ENCODE measurements at regions of chr7 and their contacts with region 1.

Region 1: GRCh38 chr7:37074370-37074769 is 350.1 kb upstream of the AOAH start:
- DNase-seq: peak; percentile 54
- H3K4me3 Mint-ChIP-seq: no peak overlapping the region
- H3K27ac Mint-ChIP-seq: no peak overlapping the region
- H3K4me1 Mint-ChIP-seq: peaks cover 30% of the 10 kb centered on the region
- H3K27me3 Mint-ChIP-seq: no peaks in the 10 kb centered on the region

Region 2: DNA sequence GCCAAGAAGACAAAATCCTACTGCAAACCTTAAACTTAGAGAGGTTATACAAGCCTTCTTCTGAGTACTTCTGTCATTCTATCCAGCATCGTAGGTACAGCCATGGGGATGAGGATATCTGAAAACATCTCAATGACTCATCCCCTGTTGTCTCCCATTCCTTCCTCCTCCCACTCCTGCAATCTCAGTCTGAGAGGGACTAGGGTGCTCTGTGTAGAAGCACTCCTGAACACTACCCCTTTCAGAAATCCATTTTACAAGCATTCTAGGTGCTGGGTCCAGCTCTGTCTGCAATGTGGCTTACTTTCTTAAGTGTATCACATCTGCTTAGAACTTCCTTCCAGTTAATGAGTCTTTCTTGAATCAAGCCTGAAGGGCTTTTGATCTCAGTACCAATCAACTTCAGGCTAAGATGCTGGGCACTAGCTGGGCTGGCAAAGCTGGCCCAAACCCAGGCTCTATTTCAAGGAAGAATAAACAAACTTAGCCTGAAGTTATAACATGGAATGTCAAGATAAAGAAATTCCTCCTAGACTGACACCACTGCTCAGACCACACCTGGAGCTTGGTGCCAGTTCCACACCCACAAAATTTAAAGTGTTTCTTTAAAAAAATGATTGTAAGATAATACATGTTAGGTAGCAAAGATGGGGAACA is 79.8 kb before region 1 on chr7:
- intact Hi-C with region 1: no loop called
- DNase-seq: no peak
- H3K4me3 Mint-ChIP-seq: no peak overlapping the region
- H3K27ac Mint-ChIP-seq: no peak overlapping the region
- H3K4me1 Mint-ChIP-seq: peaks cover 4% of the 10 kb centered on the region
- H3K27me3 Mint-ChIP-seq: no peaks in the 10 kb centered on the region

Region 3: DNA sequence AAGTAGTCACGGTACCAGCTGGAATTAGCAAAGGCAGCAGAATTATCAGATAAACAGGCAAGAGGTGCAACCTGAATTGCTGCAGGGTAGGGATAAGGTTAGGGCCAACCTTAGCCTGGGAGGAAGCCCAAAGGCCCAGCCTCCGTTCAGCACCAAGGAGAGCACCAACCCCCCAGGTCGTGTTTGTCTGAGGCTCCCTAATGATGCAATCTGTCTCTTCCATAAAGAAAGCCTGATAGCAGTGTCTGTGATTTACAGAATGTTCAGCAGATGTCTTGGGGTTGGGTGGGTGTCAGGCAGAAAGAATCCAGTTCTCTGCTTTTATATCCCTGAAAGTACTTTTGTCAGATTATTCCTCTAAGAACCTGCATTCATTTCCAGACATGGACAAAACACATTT is 21.7 kb before region 1 on chr7:
- intact Hi-C with region 1: no loop called
- DNase-seq: peak; percentile 77
- H3K4me3 Mint-ChIP-seq: no peak overlapping the region
- H3K27ac Mint-ChIP-seq: no peak overlapping the region
- H3K4me1 Mint-ChIP-seq: peaks cover 2% of the 10 kb centered on the region
- H3K27me3 Mint-ChIP-seq: no peaks in the 10 kb centered on the region

Region 4: DNA sequence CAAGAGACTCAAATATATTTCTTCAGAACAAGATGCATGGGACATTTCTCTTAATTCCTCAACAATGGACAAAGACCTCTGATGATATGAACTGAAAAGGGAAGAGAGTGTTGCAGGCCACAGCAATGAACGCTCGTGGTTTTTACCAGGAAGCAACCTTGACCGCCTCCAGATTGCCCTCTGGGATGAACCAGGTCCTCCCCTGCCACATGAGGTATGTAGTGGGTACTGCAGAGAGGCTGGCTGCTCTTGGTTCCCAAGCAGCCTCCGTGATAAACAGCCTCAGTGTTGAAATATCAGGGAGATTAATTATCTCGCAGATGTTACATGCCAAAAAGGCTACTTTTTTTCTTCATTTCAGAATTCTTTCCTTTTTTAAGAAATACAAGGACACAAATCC is 35.5 kb after region 1 on chr7:
- intact Hi-C with region 1: loop called (anchors 5 kb)
- DNase-seq: no peak
- H3K4me3 Mint-ChIP-seq: no peak overlapping the region
- H3K27ac Mint-ChIP-seq: no peak overlapping the region
- H3K4me1 Mint-ChIP-seq: peaks cover 33% of the 10 kb centered on the region
- H3K27me3 Mint-ChIP-seq: no peaks in the 10 kb centered on the region

Region 5: GRCh38 chr7:37281368-37282092 is 207.2 kb after region 1 on chr7:
- intact Hi-C with region 1: no loop called
- DNase-seq: no peak
- H3K4me3 Mint-ChIP-seq: no peak overlapping the region
- H3K27ac Mint-ChIP-seq: no peak overlapping the region
- H3K4me1 Mint-ChIP-seq: peaks cover 24% of the 10 kb centered on the region
- H3K27me3 Mint-ChIP-seq: no peaks in the 10 kb centered on the region